Dorsolateral prefrontal cortex (tissue), 120 donors: ENCODE measurements at regions of chr2 and their contacts with region 1.

Region 1: GRCh38 chr2:27489498-27490397 is at the start of gene IFT172:
- DNase-seq: peak; percentile 96 to 99 (median 99)
- H3K4me3 ChIP-seq: peak within 1 kb of the TSS; percentile 52 to 97 (median 77)
- H3K27ac ChIP-seq: peak within 1 kb of the TSS; percentile 19 to 93 (median 84)
- H3K27me3 ChIP-seq: no peaks in the 10 kb centered on the region
- CTCF ChIP-seq: peak in 15 of 56 donors; percentile 8 to 43 (median 24)
- total RNA-seq, gene IFT172: 59.8 to 153 (median 94.6) TPM

Region 2: DNA sequence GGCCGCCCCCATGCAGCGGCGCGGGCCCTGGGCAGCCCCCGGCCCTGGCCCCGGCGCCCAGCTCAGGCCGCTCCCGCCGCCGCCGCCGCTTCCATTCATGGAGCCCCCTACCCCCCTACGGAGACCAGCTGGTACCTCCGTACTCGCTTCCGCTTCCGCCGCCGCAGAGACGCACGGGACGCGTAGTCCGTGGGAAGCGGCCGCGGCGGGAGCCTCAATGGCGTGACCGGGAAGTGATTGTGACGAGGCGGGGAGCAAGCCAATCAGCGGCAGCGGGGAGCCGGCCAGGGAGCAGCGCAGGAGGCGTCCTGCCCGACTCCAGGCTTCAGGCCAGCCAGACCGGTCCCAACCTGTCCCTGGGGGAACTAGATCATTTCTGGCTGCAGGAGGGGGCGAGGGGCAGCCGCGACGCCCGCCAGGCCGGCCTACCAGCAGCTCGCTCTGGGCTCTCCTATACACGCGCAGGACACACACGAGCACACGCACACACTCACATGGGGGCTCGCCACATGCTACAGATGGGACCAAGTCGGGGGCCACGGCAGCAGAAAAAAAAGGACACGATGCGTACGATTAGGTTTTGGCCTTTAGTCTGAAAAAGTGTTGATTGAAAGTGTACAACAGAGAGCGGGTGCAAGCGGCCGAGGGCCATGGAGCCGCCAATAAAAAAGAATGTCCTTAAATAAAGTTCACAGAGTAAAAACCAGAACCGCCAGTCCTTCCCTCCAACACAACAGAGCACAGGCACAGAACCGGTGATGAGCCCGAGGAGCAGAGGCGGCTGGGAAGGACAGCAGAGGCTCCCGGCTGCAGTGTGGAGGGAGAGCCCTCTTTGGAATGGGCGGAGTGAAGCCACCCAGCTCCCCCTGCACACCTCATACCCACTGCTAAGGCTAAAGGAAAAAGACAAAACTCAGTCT is 108.9 kb before region 1 on chr2 and contains the start of gene ZNF513:
- intact Hi-C with region 1: loop called in 1 of 2 experiments (anchors 5 kb)
- DNase-seq: peak; percentile 96 to 99 (median 98)
- H3K4me3 ChIP-seq: peak within 1 kb of the TSS; percentile 51 to 99 (median 74)
- H3K27ac ChIP-seq: peak within 1 kb of the TSS in 58 of 59 donors; percentile 58 to 97 (median 91)
- H3K27me3 ChIP-seq: no peaks in the 10 kb centered on the region
- CTCF ChIP-seq: peak in 15 of 56 donors; percentile 6 to 51 (median 13)
- total RNA-seq, gene ZNF513: 13.9 to 41.1 (median 20.6) TPM

Region 3: DNA sequence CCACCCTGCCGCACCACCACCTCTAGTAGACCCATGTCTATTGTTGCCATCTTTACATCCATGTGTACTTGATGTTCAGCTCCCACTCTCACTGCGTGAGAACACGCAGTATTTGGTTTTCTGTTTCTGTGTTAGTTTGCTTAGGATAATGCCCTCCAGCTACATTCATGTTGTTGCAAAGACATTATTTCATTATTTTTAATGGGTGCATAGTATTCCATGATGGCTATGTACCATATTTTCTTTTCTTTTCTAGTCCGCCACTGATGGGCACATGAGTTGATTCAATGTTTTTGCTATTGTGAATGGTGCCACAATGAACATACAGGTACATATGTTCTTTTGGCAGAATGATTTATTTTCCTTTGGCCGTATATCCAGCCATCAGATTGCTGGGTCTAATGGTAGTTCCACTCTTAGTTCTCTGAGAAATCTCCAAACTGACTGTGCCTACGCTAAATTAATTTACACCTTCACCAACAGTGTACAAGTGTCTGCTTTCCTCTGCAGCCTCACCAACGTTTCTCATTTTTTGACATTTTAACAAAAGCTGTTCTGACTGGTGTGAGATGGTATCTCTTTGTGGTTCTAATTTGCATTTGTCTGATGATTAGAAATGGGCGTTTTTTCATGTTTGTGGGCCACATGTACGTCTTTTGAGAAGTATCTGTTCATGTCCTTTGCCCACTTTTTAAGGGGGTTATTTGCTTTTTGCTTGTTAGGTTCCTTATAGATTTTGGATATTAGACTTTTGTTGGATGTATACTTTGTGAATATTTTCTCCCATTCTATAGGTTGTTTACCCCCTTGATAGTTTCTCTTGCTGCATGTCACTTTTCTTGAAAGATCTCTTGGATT is 98.7 kb before region 1 on chr2:
- intact Hi-C with region 1: no loop called
- DNase-seq: no peak
- H3K4me3 ChIP-seq: no peak overlapping the region
- H3K27ac ChIP-seq: no peak overlapping the region
- H3K27me3 ChIP-seq: no peaks in the 10 kb centered on the region
- CTCF ChIP-seq: no peak

Region 4: GRCh38 chr2:27428213-27428977 is 61.4 kb before region 1 on chr2 and contains the start of gene NRBP1:
- intact Hi-C with region 1: loop called in 1 of 2 experiments (anchors 5 kb)
- DNase-seq: peak; percentile 83 to 97 (median 93)
- H3K4me3 ChIP-seq: peak within 1 kb of the TSS; percentile 67 to 100 (median 94)
- H3K27ac ChIP-seq: peak within 1 kb of the TSS; percentile 81 to 99 (median 96)
- H3K27me3 ChIP-seq: no peaks in the 10 kb centered on the region
- CTCF ChIP-seq: peak in 33 of 56 donors; percentile 2 to 48 (median 27)
- total RNA-seq, gene NRBP1: 61.5 to 97.0 (median 80.4) TPM

Region 5: DNA sequence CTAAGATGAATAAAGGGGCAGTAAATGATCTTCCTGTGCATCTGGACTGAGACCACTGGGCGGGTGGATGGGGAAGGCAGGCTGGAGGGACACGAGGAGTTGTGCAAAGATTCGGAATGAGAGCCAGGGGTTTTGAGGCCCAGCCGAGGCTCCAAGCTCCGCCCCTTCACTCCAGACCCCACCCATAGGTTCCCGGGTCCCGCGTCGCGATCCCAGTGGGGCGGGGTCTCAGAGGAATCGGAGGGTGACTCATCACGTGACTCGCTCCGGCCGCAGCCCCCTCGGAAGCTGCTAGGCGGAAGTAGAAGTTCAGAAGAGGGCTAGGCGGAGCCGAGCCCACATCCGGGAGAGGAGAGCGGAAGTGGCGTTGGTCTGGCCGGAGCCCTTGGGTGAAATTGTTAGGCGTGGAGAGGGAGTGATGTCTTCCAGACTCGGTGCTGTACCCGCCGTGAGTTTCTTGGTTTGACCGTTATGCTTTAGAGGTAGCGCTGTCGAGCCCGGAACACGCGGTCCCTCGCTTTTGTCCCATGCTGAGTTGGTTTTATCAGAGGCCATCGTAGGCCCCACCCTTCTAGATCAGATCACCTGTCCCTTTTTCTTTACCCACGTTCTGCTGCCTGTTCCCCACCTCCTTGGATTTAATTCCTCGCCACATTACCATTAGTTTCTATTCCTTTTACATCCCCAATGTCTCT is 93.1 kb after region 1 on chr2 and contains the start of gene ZNF512:
- intact Hi-C with region 1: loop called in 1 of 2 experiments (anchors 5 kb)
- DNase-seq: peak; percentile 71 to 91 (median 84)
- H3K4me3 ChIP-seq: peak within 1 kb of the TSS; percentile 50 to 94 (median 77)
- H3K27ac ChIP-seq: peak within 1 kb of the TSS in 51 of 59 donors; percentile 14 to 83 (median 65)
- H3K27me3 ChIP-seq: no peaks in the 10 kb centered on the region
- CTCF ChIP-seq: peak in 14 of 56 donors; percentile 7 to 37 (median 16)
- total RNA-seq, gene ZNF512: 30.4 to 63.1 (median 44.4) TPM

Region 6: DNA sequence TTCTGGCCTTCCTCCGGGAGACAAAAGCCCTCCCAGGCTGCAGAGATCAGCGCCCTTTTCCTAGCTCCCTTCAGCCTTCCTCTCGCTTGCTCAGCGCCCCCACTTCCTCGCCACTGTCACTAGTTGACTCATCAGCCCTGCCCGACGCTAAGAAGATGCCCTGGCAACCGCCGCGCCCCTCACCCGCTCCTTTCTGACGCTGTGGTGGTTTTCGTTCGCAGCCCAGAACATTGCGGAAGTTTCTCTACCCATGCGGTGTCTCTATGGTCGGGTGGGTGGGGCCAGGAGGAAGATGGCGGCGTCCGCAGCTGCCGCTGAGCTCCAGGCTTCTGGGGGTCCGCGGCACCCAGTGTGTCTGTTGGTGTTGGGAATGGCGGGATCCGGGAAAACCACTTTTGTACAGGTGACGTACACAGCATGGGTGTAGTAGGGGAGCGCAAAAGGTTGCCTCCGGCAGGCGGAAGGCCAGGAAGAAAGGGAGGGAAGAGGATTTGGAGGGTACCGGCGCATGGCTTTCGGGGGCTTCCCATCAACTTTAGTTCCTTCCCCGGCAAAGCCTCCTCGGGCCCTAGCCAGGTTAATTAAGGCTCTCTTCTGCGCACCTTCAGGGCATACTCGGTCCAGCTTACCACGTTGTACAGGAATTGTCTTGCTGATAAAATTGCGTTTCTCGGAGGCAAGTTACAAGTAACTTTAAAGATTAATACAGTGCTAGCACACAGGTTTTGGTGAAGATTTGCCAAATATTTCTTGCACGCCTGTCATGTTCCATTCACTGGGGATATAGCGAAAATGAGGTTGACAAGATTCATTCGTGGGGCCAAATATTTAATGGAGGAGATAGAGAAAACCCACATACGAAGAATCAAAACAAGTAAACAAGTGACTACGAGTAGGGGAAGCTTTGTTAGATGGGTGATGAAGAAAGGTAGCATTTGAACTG is 139.3 kb after region 1 on chr2 and contains the starts of genes CCDC121 and GPN1:
- intact Hi-C with region 1: loop called (anchors 2 to 10 kb)
- DNase-seq: peak; percentile 76 to 95 (median 90)
- H3K4me3 ChIP-seq: peak within 1 kb of the TSS; percentile 68 to 99 (median 85)
- H3K27ac ChIP-seq: peak within 1 kb of the TSS; percentile 13 to 97 (median 86)
- H3K27me3 ChIP-seq: no peaks in the 10 kb centered on the region
- CTCF ChIP-seq: peak in 9 of 56 donors; percentile 6 to 38 (median 22)
- total RNA-seq, gene CCDC121: 2.9 to 21.9 (median 6.8) TPM
- total RNA-seq, gene GPN1: 11.8 to 39.6 (median 21.3) TPM